Activated naive CD4-positive, alpha-beta T cell treated with anti-CD3 and anti-CD28 coated beads for 36 hours (primary cell): ENCODE measurements at regions of chr14 and their contacts with region 1.

Region 1: GRCh38 chr14:73458151-73458976 is at the start of gene NUMB:
- DNase-seq: peak; percentile 99
- H3K4me3 Mint-ChIP-seq: peak within 1 kb of the TSS; percentile 92
- H3K27ac Mint-ChIP-seq: peak within 1 kb of the TSS; percentile 79
- H3K4me1 Mint-ChIP-seq: peaks cover 42% of the 10 kb centered on the region
- H3K27me3 Mint-ChIP-seq: no peaks in the 10 kb centered on the region
- total RNA-seq, gene NUMB: 24.2 to 26.4 TPM

Region 2: GRCh38 chr14:73026845-73027542 is 431.4 kb before region 1 on chr14 and contains the start of gene ZFYVE1:
- CTCF ChIA-PET with region 1: no interaction called
- intact Hi-C with region 1: loop called (anchors 2 kb)
- DNase-seq: peak; percentile 97
- H3K4me3 Mint-ChIP-seq: peak within 1 kb of the TSS; percentile 92
- H3K27ac Mint-ChIP-seq: peak within 1 kb of the TSS; percentile 80
- H3K4me1 Mint-ChIP-seq: peaks cover 39% of the 10 kb centered on the region
- H3K27me3 Mint-ChIP-seq: no peaks in the 10 kb centered on the region
- total RNA-seq, gene ZFYVE1: 8.5 to 9.2 TPM

Region 3: GRCh38 chr14:73136387-73137225 is 321.8 kb before region 1 on chr14 and contains the start of gene PSEN1:
- CTCF ChIA-PET with region 1: no interaction called
- intact Hi-C with region 1: loop called (anchors 1 kb)
- DNase-seq: peak; percentile 98
- H3K4me3 Mint-ChIP-seq: peak within 1 kb of the TSS; percentile 98
- H3K27ac Mint-ChIP-seq: peak within 1 kb of the TSS; percentile 97
- H3K4me1 Mint-ChIP-seq: peaks cover 26% of the 10 kb centered on the region
- H3K27me3 Mint-ChIP-seq: no peaks in the 10 kb centered on the region
- total RNA-seq, gene PSEN1: 24.5 to 26.0 TPM

Region 4: GRCh38 chr14:73392329-73393257 is 65.8 kb before region 1 on chr14:
- CTCF ChIA-PET with region 1: no interaction called
- intact Hi-C with region 1: loop called (anchors 5 kb)
- DNase-seq: peak; percentile 45
- H3K4me3 Mint-ChIP-seq: no peak overlapping the region
- H3K27ac Mint-ChIP-seq: peak overlapping the region; percentile 25
- H3K4me1 Mint-ChIP-seq: peaks cover 15% of the 10 kb centered on the region
- H3K27me3 Mint-ChIP-seq: no peaks in the 10 kb centered on the region

Region 5: GRCh38 chr14:73491256-73492042 is 33.1 kb after region 1 on chr14:
- CTCF ChIA-PET with region 1: no interaction called
- intact Hi-C with region 1: loop called (anchors 1 kb)
- DNase-seq: peak; percentile 74
- H3K4me3 Mint-ChIP-seq: peak overlapping the region; percentile 78
- H3K27ac Mint-ChIP-seq: no peak overlapping the region
- H3K4me1 Mint-ChIP-seq: peaks cover 42% of the 10 kb centered on the region
- H3K27me3 Mint-ChIP-seq: no peaks in the 10 kb centered on the region

Region 6: DNA sequence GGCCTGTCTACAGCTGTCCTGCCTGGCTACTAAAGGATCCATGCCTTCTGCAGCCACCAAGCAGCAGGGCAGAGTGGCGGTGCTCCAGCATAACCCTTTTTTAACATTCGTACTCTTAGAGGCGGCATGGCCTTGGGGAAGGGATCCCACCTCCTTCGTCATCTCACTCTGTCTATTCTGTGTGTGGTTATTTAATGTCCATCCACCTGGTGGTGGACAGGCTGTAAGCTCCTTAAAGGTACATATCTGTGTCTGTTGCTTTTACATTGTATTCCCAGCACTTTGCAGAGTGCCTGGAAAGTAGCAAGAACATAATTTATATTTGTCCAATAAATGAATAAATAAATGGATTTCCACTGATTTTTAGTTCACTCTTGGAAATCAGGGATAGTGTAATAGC is 62.9 kb after region 1 on chr14:
- CTCF ChIA-PET with region 1: no interaction called
- intact Hi-C with region 1: no loop called
- DNase-seq: no peak
- H3K4me3 Mint-ChIP-seq: no peak overlapping the region
- H3K27ac Mint-ChIP-seq: no peak overlapping the region
- H3K4me1 Mint-ChIP-seq: no peaks in the 10 kb centered on the region
- H3K27me3 Mint-ChIP-seq: no peaks in the 10 kb centered on the region